ENCODE measurements at regions of chr7 and their contacts with region 1.

Region 1: GRCh38 chr7:66114793-66115649 is at the start of gene CRCP:
- DNase-seq: peak; percentile 74 to 94 (median 86)
- ATAC-seq: peak; percentile 91
- H3K4me3 ChIP-seq: peak within 1 kb of the TSS; percentile 95 to 97
- H3K4me3 Mint-ChIP-seq: peak within 1 kb of the TSS; percentile 98
- H3K27ac ChIP-seq: peak within 1 kb of the TSS; percentile 93 to 97
- H3K27ac Mint-ChIP-seq: peak within 1 kb of the TSS; percentile 97
- H3K4me1 ChIP-seq: peaks cover 35% of the 10 kb centered on the region
- H3K4me1 Mint-ChIP-seq: peaks cover 50% of the 10 kb centered on the region
- H3K27me3 ChIP-seq: no peaks in the 10 kb centered on the region
- H3K27me3 Mint-ChIP-seq: no peaks in the 10 kb centered on the region
- CTCF ChIP-seq: no peak
- total RNA-seq, gene CRCP: 38.0 to 42.4 TPM

Region 2: DNA sequence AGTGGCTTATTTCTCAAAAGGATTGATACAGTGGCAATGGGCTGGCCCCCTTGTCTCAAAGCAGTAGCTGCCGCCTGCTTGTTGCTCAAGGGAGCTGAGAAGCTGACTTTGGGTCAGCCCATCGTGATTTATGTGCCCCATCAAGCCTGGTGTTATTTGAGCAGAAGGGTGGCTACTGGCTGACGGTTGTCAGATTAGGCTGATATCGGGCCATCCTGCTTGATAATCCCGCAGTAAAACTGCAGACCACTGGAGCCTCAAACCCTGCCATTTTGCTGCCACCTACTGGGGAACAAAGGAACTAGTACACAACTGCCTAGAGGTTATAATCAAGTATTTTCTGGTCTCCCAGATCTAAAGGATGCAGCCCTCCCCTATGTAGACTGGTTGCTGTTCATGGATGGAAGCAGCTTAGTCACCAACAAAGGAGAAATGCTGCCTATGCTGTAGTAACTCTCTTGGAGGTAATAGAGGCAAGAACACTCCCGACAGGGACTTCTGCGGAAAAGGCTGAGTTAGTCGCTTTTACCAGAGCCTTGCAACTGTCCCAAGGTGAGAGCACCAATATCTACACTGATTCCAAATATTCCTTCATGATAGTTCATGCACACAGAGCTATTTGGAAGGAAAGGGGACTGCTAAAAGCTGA is 807.2 kb before region 1 on chr7:
- CTCF ChIA-PET with region 1: no interaction called
- POLR2A ChIA-PET with region 1: no interaction called
- intact Hi-C with region 1: no loop called
- DNase-seq: peak in 8 of 9 experiments; percentile 13 to 72 (median 55)
- ATAC-seq: peak; percentile 63
- H3K4me3 ChIP-seq: no peak overlapping the region
- H3K4me3 Mint-ChIP-seq: no peak overlapping the region
- H3K27ac ChIP-seq: no peak overlapping the region
- H3K27ac Mint-ChIP-seq: no peak overlapping the region
- H3K4me1 ChIP-seq: no peaks in the 10 kb centered on the region
- H3K4me1 Mint-ChIP-seq: no peaks in the 10 kb centered on the region
- H3K27me3 ChIP-seq: no peaks in the 10 kb centered on the region
- H3K27me3 Mint-ChIP-seq: peaks cover 15% of the 10 kb centered on the region
- CTCF ChIP-seq: peak; percentile 77

Region 3: GRCh38 chr7:65750511-65751344 is 364.3 kb before region 1 on chr7:
- CTCF ChIA-PET with region 1: no interaction called
- POLR2A ChIA-PET with region 1: no interaction called
- intact Hi-C with region 1: loop called in 1 of 2 experiments (anchors 10 kb)
- DNase-seq: peak; percentile 65 to 91 (median 87)
- ATAC-seq: peak; percentile 96
- H3K4me3 ChIP-seq: peak overlapping the region; percentile 77 to 88
- H3K4me3 Mint-ChIP-seq: peak overlapping the region; percentile 88
- H3K27ac ChIP-seq: peak overlapping the region; percentile 74 to 81
- H3K27ac Mint-ChIP-seq: peak overlapping the region; percentile 88
- H3K4me1 ChIP-seq: peaks cover 16% of the 10 kb centered on the region
- H3K4me1 Mint-ChIP-seq: peaks cover 35% of the 10 kb centered on the region
- H3K27me3 ChIP-seq: no peaks in the 10 kb centered on the region
- H3K27me3 Mint-ChIP-seq: no peaks in the 10 kb centered on the region
- CTCF ChIP-seq: no peak

Region 4: GRCh38 chr7:66075590-66076461 is 39.2 kb before region 1 on chr7 and contains the start of gene ASL:
- CTCF ChIA-PET with region 1: no interaction called
- POLR2A ChIA-PET with region 1: interaction called, 3 read pairs
- intact Hi-C with region 1: loop called (anchors 1 kb)
- DNase-seq: peak; percentile 65 to 93 (median 84)
- ATAC-seq: peak; percentile 98
- H3K4me3 ChIP-seq: peak within 1 kb of the TSS; percentile 66 to 96
- H3K4me3 Mint-ChIP-seq: peak within 1 kb of the TSS; percentile 87
- H3K27ac ChIP-seq: peak within 1 kb of the TSS; percentile 55 to 67
- H3K27ac Mint-ChIP-seq: no peak within 1 kb of the TSS
- H3K4me1 ChIP-seq: peaks cover 11% of the 10 kb centered on the region
- H3K4me1 Mint-ChIP-seq: peaks cover 14% of the 10 kb centered on the region
- H3K27me3 ChIP-seq: no peaks in the 10 kb centered on the region
- H3K27me3 Mint-ChIP-seq: no peaks in the 10 kb centered on the region
- CTCF ChIP-seq: no peak
- total RNA-seq, gene ASL: 6.8 to 7.5 TPM

Region 5: DNA sequence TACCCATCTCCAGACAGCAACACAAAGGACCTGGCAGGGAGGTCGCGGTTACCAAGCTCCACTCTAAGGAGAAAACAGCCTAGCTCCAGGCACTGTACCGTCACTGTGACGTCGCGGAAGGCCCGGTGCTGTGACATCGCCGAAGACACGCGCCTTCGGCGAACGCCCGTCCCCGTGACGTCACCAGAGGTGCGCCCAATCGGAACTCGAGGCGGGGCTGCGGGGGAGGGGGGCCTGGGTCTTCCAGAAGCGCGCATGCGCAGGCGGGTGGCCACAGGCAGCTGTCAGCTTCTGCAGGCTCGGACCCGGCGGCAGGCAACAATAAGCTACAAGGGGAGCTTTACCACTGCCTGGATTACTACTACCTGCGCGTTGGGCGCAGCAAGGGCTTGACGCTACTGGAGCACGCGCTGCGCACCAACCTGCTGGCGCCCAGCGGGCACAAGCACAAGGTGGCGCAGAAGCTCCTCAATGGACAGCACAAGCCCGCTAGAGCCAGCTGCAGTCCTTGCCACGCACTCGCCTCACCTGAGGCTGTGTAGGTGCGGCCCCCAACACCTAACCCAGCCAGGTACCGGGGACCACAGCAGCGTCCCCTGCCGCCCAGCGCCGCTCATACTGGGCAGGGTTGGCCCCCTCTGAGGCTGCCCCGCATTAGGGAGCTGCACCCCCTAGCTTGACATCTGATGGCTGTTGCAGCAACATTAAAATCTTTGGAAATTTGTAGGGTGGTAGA is 298.5 kb after region 1 on chr7:
- CTCF ChIA-PET with region 1: no interaction called
- POLR2A ChIA-PET with region 1: no interaction called
- intact Hi-C with region 1: loop called in 1 of 2 experiments (anchors 5 kb)
- DNase-seq: peak; percentile 62 to 91 (median 85)
- ATAC-seq: peak; percentile 86
- H3K4me3 ChIP-seq: peak overlapping the region; percentile 56 to 62
- H3K4me3 Mint-ChIP-seq: peak overlapping the region; percentile 80
- H3K27ac ChIP-seq: peak overlapping the region; percentile 39 to 43
- H3K27ac Mint-ChIP-seq: peak overlapping the region; percentile 87
- H3K4me1 ChIP-seq: peaks cover 15% of the 10 kb centered on the region
- H3K4me1 Mint-ChIP-seq: peaks cover 12% of the 10 kb centered on the region
- H3K27me3 ChIP-seq: no peaks in the 10 kb centered on the region
- H3K27me3 Mint-ChIP-seq: no peaks in the 10 kb centered on the region
- CTCF ChIP-seq: peak; percentile 50

Measured in CD8-positive, alpha-beta T cell (primary cell).